PC-3 (cell line): ENCODE measurements at regions of chr13 and their contacts with region 1.

Region 1: DNA sequence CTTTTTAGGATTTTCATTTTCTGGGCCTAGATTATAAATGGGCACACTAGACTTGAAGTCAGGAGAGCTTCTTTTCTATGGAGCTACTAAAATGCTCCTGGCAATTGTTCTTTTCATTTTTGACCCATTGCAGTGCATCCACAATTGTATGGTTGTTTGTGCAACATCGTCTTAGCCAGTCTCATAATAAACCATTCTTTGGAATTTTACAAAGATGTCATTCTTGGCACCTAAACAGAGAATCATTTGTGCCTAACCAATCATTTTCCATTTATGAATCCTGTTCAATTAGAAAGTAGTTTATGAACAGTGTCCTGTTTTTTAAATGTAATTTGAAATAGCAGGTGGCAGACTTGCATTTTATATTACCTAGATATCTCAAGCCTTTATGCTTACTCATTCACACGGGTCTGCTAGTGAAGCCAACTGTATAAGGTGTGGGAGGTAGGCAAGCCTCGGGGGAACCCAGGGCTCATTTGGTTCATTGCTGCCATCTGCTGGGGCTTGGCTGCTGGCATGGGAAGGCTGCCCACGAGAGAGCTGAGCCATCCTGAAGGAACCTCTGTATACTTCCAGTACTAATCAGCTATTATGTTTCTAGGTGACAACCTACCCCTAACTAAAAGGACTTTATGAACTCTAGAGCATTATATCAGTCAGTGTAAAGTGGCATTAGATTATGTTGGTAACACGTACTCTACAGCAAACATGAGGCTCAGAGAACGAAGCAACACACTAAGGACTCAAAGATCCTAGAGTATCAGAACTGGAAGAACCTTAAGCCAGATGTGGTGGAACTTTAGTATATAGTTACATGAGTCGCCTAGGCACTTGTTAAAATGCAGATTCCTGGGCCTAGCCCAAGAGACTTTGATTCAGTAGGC is 60.0 kb downstream of the TPT1 start:
- DNase-seq: peak; percentile 83
- ATAC-seq: peak; percentile 99
- H3K4me3 ChIP-seq: no peak overlapping the region
- H3K27ac ChIP-seq: no peak overlapping the region
- H3K4me1 ChIP-seq: peaks cover 10% of the 10 kb centered on the region; the same call in 1 of the 2 replicates
- H3K27me3 ChIP-seq: no peaks in the 10 kb centered on the region
- CTCF ChIP-seq: peak; percentile 87

Region 2: DNA sequence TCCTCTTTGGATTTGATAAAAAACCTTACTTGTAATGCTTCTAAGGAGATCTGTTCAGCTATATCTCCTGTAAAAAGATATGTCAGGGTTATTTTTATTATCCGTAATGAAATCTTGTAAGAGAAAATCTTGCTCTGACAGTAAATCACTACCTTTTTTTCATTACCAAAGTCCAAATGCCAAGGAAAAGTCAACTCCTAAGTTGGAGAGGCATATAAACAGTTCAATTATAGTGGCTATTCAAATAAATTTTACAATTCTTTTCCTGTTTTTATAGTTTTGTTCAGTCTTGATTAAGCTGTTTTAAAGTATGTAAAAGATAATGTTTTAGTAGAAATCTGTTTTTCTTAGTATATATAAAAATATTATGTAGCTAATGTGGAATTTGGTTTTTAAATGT is 89.1 kb before region 1 on chr13:
- CTCF ChIA-PET with region 1: no interaction called
- POLR2A ChIA-PET with region 1: no interaction called
- intact Hi-C with region 1: loop called (anchors 1 kb)
- DNase-seq: no peak
- ATAC-seq: no peak
- H3K4me3 ChIP-seq: no peak overlapping the region
- H3K27ac ChIP-seq: no peak overlapping the region
- H3K4me1 ChIP-seq: peaks cover 37% of the 10 kb centered on the region
- H3K27me3 ChIP-seq: no peaks in the 10 kb centered on the region
- CTCF ChIP-seq: no peak

Region 3: DNA sequence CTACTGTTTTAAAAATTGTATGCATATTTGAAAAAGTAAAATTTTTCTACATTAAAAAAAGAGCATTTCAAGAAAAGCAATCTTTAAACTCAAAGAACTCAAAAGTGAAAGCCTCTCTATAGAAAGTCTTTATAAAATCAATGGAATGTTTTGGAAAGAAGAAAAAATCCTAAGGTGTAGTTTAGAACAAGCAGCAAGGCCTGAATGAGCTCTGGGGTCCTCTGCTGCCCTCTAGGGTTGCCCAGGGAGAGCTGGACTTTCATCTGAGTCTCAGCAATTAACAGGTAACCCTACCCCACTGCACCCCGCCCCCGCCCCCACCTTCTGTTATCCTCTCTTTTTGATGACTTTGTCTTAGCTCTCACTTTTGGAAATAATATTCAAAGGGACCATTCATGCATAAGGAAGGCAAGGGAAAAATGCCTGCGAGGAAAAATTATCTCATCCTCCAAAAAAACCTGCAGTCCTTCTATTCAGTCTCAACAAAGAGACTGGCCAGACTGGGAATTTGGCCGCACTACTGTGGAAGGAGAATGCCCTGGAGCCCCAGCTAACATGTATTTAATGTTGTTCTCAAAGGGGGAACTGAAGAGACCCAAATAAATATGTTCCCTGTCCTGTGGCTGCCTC is 113.1 kb after region 1 on chr13:
- CTCF ChIA-PET with region 1: no interaction called
- POLR2A ChIA-PET with region 1: no interaction called
- intact Hi-C with region 1: no loop called
- DNase-seq: peak; percentile 56
- ATAC-seq: peak; percentile 88
- H3K4me3 ChIP-seq: no peak overlapping the region
- H3K27ac ChIP-seq: no peak overlapping the region
- H3K4me1 ChIP-seq: no peaks in the 10 kb centered on the region
- H3K27me3 ChIP-seq: no peaks in the 10 kb centered on the region
- CTCF ChIP-seq: peak; percentile 58